ENCODE measurements at regions of chr12 and their contacts with region 1.

Region 1: GRCh38 chr12:10094646-10095395 is 4.0 kb downstream of the CLEC1A start:
- DNase-seq: no peak
- H3K4me3 Mint-ChIP-seq: no peak overlapping the region
- H3K27ac Mint-ChIP-seq: no peak overlapping the region
- H3K4me1 Mint-ChIP-seq: peaks cover 3% of the 10 kb centered on the region
- H3K27me3 Mint-ChIP-seq: peaks cover 5% of the 10 kb centered on the region

Region 2: GRCh38 chr12:10069099-10069498 is 25.7 kb before region 1 on chr12:
- CTCF ChIA-PET with region 1: no interaction called
- POLR2A ChIA-PET with region 1: no interaction called
- intact Hi-C with region 1: loop called (anchors 2 kb)
- DNase-seq: no peak
- H3K4me3 Mint-ChIP-seq: no peak overlapping the region
- H3K27ac Mint-ChIP-seq: no peak overlapping the region
- H3K4me1 Mint-ChIP-seq: no peaks in the 10 kb centered on the region
- H3K27me3 Mint-ChIP-seq: peaks cover 11% of the 10 kb centered on the region

Region 3: GRCh38 chr12:10082117-10082874 is 12.5 kb before region 1 on chr12:
- CTCF ChIA-PET with region 1: no interaction called
- POLR2A ChIA-PET with region 1: no interaction called
- intact Hi-C with region 1: no loop called
- DNase-seq: no peak
- H3K4me3 Mint-ChIP-seq: no peak overlapping the region
- H3K27ac Mint-ChIP-seq: no peak overlapping the region
- H3K4me1 Mint-ChIP-seq: no peaks in the 10 kb centered on the region
- H3K27me3 Mint-ChIP-seq: peaks cover 25% of the 10 kb centered on the region

Measured in activated CD4-positive, alpha-beta memory T cell treated with anti-CD3 and anti-CD28 coated beads for 36 hours (primary cell).